ENCODE measurements at regions of chr21 and their contacts with region 1.

Region 1: GRCh38 chr21:14864211-14865021 is 200.4 kb downstream of the NRIP1 start:
- DNase-seq: no peak
- H3K4me3 ChIP-seq: no peak overlapping the region
- CTCF ChIP-seq: peak; percentile 70

Region 2: GRCh38 chr21:14877570-14878228 is 13.3 kb after region 1 on chr21:
- CTCF ChIA-PET with region 1: interaction called, 13 read pairs
- POLR2A ChIA-PET with region 1: no interaction called
- DNase-seq: no peak
- H3K4me3 ChIP-seq: no peak overlapping the region
- CTCF ChIP-seq: no peak

Region 3: GRCh38 chr21:14989359-14989758 is 124.9 kb after region 1 on chr21:
- CTCF ChIA-PET with region 1: interaction called, 10 read pairs
- POLR2A ChIA-PET with region 1: no interaction called
- DNase-seq: no peak
- H3K4me3 ChIP-seq: no peak overlapping the region
- CTCF ChIP-seq: no peak

Region 4: DNA sequence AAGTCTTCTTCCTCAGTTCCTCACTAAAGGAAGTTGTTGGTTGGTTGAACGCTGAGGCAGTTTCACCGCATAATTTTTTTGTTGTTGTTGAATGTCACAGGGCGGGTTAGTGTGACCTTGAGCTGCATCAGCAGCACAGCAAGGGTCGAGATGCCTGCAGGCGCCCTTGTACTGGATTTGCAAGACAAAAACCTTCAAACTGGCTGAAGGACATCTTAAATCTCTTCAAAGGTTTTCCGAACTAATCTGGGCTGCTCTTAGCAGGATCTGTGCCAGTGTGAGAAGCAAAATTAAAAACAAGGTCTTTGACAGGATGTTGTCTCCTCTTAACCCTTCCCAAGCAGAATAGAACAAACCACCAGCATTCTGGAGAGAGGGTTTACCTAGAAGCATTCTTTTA is 141.0 kb after region 1 on chr21:
- CTCF ChIA-PET with region 1: interaction called, 12 read pairs
- POLR2A ChIA-PET with region 1: no interaction called
- DNase-seq: no peak
- H3K4me3 ChIP-seq: peak overlapping the region; percentile 29; the same call in 1 of the 2 replicates
- CTCF ChIP-seq: no peak

Region 5: DNA sequence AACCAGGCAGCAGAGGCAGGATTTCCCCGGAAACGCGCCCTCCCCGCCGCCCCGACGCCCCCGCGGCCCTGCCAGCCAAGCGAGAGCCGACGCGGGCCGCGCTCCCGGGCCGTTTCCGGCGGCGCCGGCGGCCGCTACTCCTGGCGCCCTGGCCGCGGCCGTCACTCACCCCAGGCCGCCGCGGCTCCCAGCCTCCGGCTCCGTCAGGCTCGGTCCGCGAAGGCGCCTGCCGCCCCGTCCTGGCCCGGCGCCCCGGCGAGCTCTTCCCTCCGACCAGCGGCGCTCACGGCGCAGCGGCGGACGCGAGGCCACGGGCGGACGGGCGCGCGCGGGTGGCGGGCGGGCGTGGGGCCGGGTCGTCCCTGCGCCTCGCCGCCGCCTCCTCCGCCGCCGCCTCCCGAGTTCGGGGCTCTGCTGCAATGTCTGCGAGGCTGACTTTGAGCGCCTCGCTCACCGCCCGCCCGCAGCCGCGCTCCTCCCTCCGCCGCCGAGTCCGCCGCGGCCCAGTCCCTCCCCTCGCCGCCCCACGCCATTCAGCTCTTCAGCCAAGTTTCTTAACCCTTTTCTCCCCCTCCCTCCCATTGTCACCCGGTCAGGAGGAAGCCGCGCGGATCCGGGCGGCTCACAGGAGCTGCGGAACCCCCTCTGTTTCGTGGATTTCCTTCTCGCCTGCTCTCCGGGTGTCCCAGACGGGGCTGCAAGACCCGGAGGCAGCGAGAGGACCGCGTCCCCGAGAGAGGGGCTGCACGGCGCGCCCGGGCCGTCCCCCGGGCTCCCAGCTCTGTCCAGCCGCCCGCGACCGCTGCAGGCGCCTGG is 200.4 kb after region 1 on chr21 and contains the start of gene NRIP1:
- CTCF ChIA-PET with region 1: interaction called, 10 read pairs
- POLR2A ChIA-PET with region 1: interaction called, 4 read pairs
- DNase-seq: peak; percentile 37
- H3K4me3 ChIP-seq: peak within 1 kb of the TSS; percentile 77
- CTCF ChIP-seq: no peak

Region 6: GRCh38 chr21:15483138-15483780 is 618.8 kb after region 1 on chr21:
- CTCF ChIA-PET with region 1: interaction called, 30 read pairs
- POLR2A ChIA-PET with region 1: no interaction called
- DNase-seq: peak; percentile 36
- H3K4me3 ChIP-seq: no peak overlapping the region
- CTCF ChIP-seq: peak; percentile 96